Activated B cell treated with CpG ODN at 0.5 μM for 24 hours (primary cell): ENCODE measurements at regions of chr1 and their contacts with region 1.

Region 1: GRCh38 chr1:193141804-193142203 is 20.0 kb downstream of the CDC73 start:
- DNase-seq: no peak
- ATAC-seq: no peak
- H3K4me3 Mint-ChIP-seq: no peak overlapping the region
- H3K27ac Mint-ChIP-seq: no peak overlapping the region
- H3K4me1 Mint-ChIP-seq: no peaks in the 10 kb centered on the region
- H3K27me3 Mint-ChIP-seq: no peaks in the 10 kb centered on the region
- CTCF ChIP-seq: no peak

Region 2: GRCh38 chr1:192263436-192263835 is 878.4 kb before region 1 on chr1:
- CTCF ChIA-PET with region 1: no interaction called
- POLR2A ChIA-PET with region 1: no interaction called
- intact Hi-C with region 1: no loop called
- DNase-seq: no peak
- ATAC-seq: no peak
- H3K4me3 Mint-ChIP-seq: no peak overlapping the region
- H3K27ac Mint-ChIP-seq: no peak overlapping the region
- H3K4me1 Mint-ChIP-seq: no peaks in the 10 kb centered on the region
- H3K27me3 Mint-ChIP-seq: no peaks in the 10 kb centered on the region
- CTCF ChIP-seq: no peak

Region 3: DNA sequence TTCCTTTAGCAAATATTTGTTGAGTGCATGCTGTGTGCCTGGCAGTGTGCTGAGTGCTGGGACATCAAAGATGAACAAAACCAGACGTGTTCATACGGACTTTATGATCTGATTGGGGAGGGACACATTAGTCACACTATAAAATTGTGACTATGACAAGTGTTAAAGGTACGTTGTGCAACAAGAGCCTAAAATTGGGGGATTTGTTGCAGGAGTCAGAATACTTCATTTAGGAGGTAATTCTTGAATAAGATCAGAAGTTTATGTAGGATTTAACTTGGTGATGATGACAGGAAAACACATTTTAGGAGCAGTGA is 15.0 kb after region 1 on chr1:
- CTCF ChIA-PET with region 1: no interaction called
- POLR2A ChIA-PET with region 1: no interaction called
- intact Hi-C with region 1: loop called (anchors 2 kb)
- DNase-seq: no peak
- ATAC-seq: no peak
- H3K4me3 Mint-ChIP-seq: no peak overlapping the region
- H3K27ac Mint-ChIP-seq: no peak overlapping the region
- H3K4me1 Mint-ChIP-seq: peaks cover 3% of the 10 kb centered on the region
- H3K27me3 Mint-ChIP-seq: no peaks in the 10 kb centered on the region
- CTCF ChIP-seq: no peak

Region 4: DNA sequence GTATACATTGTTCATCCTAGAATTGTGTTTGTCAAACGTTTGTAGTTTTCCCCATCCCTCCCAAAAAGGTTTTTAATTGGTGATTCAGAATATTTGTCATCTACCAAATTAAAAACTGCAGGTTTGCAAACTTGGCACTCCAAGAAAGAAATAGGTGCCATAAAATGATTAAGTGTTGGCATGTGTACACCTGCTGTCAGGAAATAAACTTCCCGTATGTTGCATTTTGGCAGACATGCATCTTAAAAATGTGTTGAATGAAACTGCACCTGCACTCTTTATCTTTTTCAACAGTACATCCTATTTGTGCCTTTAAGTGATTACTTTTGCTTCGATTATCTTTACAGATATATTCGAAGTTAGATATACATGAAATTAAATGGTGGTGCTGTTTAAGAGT is 37.3 kb after region 1 on chr1:
- CTCF ChIA-PET with region 1: no interaction called
- POLR2A ChIA-PET with region 1: no interaction called
- intact Hi-C with region 1: no loop called
- DNase-seq: no peak
- ATAC-seq: no peak
- H3K4me3 Mint-ChIP-seq: no peak overlapping the region
- H3K27ac Mint-ChIP-seq: no peak overlapping the region
- H3K4me1 Mint-ChIP-seq: peaks cover 4% of the 10 kb centered on the region
- H3K27me3 Mint-ChIP-seq: no peaks in the 10 kb centered on the region
- CTCF ChIP-seq: no peak